ENCODE measurements at regions of chr1 and their contacts with region 1.

Region 1: GRCh38 chr1:204989266-204990058 is 53.5 kb upstream of the CNTN2 start:
- DNase-seq: peak; percentile 71 to 90 (median 88)
- ATAC-seq: peak; percentile 90
- H3K4me3 ChIP-seq: no peak overlapping the region
- H3K27ac ChIP-seq: no peak overlapping the region
- H3K4me1 ChIP-seq: peaks cover 2 to 6% of the 10 kb centered on the region in 2 experiments; a peak in 3 of 5 replicates
- H3K27me3 ChIP-seq: peaks cover 48 to 87% of the 10 kb centered on the region in 2 experiments
- CTCF ChIP-seq: peak; percentile 95 to 99 (median 98)
- EP300 ChIP-seq: no peak
- POLR2A ChIP-seq: no peak
- RAD21 ChIP-seq: peak; percentile 90 to 96

Region 2: GRCh38 chr1:204802401-204803175 is 186.9 kb before region 1 on chr1:
- CTCF ChIA-PET with region 1: no interaction called
- POLR2A ChIA-PET with region 1: no interaction called
- in situ Hi-C with region 1: no loop called
- intact Hi-C with region 1: no loop called
- DNase-seq: no peak
- ATAC-seq: no peak
- H3K4me3 ChIP-seq: no peak overlapping the region
- H3K27ac ChIP-seq: no peak overlapping the region
- H3K4me1 ChIP-seq: peaks cover 2 to 6% of the 10 kb centered on the region in 2 experiments; a peak in 3 of 5 replicates
- H3K27me3 ChIP-seq: peaks cover 2 to 14% of the 10 kb centered on the region in 2 experiments; a peak in 3 of 5 replicates
- CTCF ChIP-seq: no peak
- EP300 ChIP-seq: no peak
- POLR2A ChIP-seq: no peak
- RAD21 ChIP-seq: no peak

Region 3: GRCh38 chr1:205061665-205062069 is 72.2 kb after region 1 on chr1:
- CTCF ChIA-PET with region 1: interaction called, 16 read pairs
- POLR2A ChIA-PET with region 1: interaction called, 3 read pairs
- in situ Hi-C with region 1: no loop called
- intact Hi-C with region 1: loop called (anchors 1 kb)
- DNase-seq: peak; percentile 80 to 85 (median 82)
- ATAC-seq: peak; percentile 85
- H3K4me3 ChIP-seq: no peak overlapping the region
- H3K27ac ChIP-seq: no peak overlapping the region
- H3K4me1 ChIP-seq: peaks cover 0 to 23% of the 10 kb centered on the region in 2 experiments; a peak in 3 of 5 replicates
- H3K27me3 ChIP-seq: peaks cover 39 to 75% of the 10 kb centered on the region in 2 experiments
- CTCF ChIP-seq: peak; percentile 92 to 98 (median 95)
- EP300 ChIP-seq: no peak
- POLR2A ChIP-seq: no peak
- RAD21 ChIP-seq: peak; percentile 82 to 95

Region 4: DNA sequence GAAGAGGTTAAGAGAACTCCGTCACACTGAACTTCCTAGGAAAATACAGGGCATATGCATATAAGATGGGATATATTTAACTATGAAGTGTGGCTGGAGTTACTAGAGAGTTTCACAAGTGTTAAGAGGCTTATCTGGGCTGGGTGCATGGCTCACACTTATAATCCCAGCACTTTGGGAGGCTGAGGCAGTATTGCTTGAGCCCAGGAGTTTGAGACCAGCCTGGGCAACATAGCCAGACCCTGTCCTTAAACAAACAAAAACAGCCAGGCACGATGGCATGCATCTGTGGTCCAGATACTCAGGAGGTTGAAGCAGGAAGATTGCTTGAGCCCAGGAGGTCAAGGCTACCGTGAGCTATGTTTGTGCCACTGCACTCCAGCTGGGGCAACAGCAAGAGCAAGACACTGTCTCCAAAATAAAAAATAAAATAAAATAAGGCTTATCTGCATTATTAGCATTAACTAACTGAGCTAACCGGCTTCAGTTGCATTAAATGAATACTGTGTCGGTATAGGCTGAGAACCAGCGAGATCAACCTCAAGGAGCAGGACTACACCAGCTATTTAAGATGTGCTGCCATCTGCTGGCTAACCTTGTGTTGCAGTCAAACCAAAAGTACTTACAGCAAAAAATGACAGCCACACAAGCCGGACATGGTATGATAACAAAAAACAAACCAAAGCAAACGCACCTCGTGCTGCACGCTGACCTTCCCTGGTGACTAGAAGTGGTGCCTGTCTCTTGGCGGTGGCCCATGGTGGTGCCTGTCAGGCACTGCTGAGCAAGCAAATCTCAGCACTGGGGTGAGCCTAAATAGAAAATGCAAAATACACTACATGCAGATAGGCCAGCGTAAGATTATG is 152.0 kb after region 1 on chr1:
- CTCF ChIA-PET with region 1: interaction called, 4 read pairs
- POLR2A ChIA-PET with region 1: no interaction called
- in situ Hi-C with region 1: no loop called
- intact Hi-C with region 1: loop called (anchors 5 kb)
- DNase-seq: peak; percentile 77 to 91 (median 79)
- ATAC-seq: peak; percentile 94
- H3K4me3 ChIP-seq: no peak overlapping the region
- H3K27ac ChIP-seq: no peak overlapping the region
- H3K4me1 ChIP-seq: peaks cover 3 to 7% of the 10 kb centered on the region in 2 experiments; a peak in 3 of 5 replicates
- H3K27me3 ChIP-seq: no peaks in the 10 kb centered on the region
- CTCF ChIP-seq: peak; percentile 87 to 92 (median 92)
- EP300 ChIP-seq: no peak
- POLR2A ChIP-seq: no peak
- RAD21 ChIP-seq: peak; percentile 65 to 83

Region 5: GRCh38 chr1:205528887-205529825 is 539.7 kb after region 1 on chr1:
- CTCF ChIA-PET with region 1: no interaction called
- POLR2A ChIA-PET with region 1: no interaction called
- in situ Hi-C with region 1: loop called (anchors 10 kb)
- intact Hi-C with region 1: no loop called
- DNase-seq: peak; percentile 87 to 96 (median 94)
- ATAC-seq: peak; percentile 95
- H3K4me3 ChIP-seq: peak overlapping the region; percentile 32
- H3K27ac ChIP-seq: no peak overlapping the region
- H3K4me1 ChIP-seq: peaks cover 0 to 37% of the 10 kb centered on the region in 2 experiments; a peak in 3 of 5 replicates
- H3K27me3 ChIP-seq: peaks cover 37 to 86% of the 10 kb centered on the region in 2 experiments; a peak in 4 of 5 replicates
- CTCF ChIP-seq: peak; percentile 92 to 95 (median 94)
- EP300 ChIP-seq: no peak
- POLR2A ChIP-seq: no peak
- RAD21 ChIP-seq: peak; percentile 81 to 95